ENCODE measurements at regions of chr14 and their contacts with region 1.

Region 1: GRCh38 chr14:63770187-63770807 is 42.4 kb upstream of the SGPP1 start:
- DNase-seq: peak; percentile 70
- H3K4me3 ChIP-seq: no peak overlapping the region
- H3K27ac ChIP-seq: no peak overlapping the region
- H3K4me1 ChIP-seq: no peaks in the 10 kb centered on the region
- H3K27me3 ChIP-seq: no peaks in the 10 kb centered on the region
- CTCF ChIP-seq: peak; percentile 78

Region 2: DNA sequence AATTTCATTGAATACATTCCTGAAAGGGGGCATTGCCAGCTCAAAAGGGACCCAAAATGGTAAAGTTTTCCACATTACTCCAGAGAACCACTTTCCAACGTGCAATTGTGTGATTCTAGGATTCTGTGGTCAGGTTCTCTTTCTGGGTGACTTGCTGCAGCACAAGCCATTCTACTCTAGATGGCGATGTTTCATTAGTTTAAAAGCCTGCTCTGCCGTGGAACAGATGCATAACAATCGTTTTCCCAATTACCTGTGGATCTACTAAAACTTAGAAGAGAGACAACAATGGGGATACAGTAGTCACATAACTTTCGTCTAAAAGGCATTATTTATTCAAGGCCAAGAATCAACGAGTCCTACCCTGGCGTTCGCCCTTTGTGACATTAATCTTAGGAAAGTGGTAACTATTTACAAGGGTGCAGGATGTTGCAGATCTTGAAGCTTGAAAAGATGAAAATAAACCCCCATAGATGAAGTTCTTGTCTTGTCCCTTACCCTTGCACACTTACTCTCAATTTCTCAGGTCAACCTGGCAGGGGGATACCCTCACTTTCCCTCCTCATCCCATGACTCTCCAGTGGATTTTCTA is 1607.2 kb before region 1 on chr14:
- CTCF ChIA-PET with region 1: no interaction called
- POLR2A ChIA-PET with region 1: no interaction called
- intact Hi-C with region 1: loop called (anchors 5 kb)
- DNase-seq: peak; percentile 74
- H3K4me3 ChIP-seq: no peak overlapping the region
- H3K27ac ChIP-seq: no peak overlapping the region
- H3K4me1 ChIP-seq: no peaks in the 10 kb centered on the region
- H3K27me3 ChIP-seq: no peaks in the 10 kb centered on the region
- CTCF ChIP-seq: peak; percentile 91

Region 3: DNA sequence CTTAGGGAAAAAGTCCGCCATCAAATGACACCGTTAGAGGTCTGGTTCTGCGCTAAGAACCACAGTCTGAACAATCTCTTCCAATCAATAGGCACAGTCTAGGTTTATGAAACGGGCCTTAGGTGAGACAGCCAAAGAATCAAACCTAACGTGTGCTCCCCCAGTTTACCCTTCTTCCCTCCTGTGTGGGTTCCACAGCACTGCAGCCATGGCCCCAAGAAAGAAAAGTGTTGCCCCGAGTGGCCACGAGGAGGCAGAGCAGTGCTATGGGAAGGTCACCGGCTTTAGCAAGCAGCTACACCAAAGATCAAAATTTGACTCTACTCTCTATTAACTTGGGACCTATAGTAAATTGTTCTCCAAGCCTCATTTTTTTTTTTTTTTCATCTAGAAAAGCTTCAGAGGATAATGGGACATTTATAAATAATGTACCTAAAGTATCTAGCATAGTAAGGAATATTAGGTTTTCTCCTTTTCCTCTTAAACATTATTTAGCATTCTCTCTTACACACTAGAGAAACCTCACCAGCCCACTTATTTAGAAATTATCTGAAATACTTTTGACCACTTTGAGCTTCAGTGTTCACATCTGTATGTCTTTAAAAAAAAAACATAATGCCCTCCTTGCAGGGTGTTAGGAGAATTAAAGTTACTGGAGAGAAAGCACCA is 381.4 kb before region 1 on chr14:
- CTCF ChIA-PET with region 1: interaction called, 16 read pairs
- POLR2A ChIA-PET with region 1: no interaction called
- intact Hi-C with region 1: loop called (anchors 10 kb)
- DNase-seq: peak; percentile 69
- H3K4me3 ChIP-seq: no peak overlapping the region
- H3K27ac ChIP-seq: no peak overlapping the region
- H3K4me1 ChIP-seq: no peaks in the 10 kb centered on the region
- H3K27me3 ChIP-seq: no peaks in the 10 kb centered on the region
- CTCF ChIP-seq: peak; percentile 86

Region 4: DNA sequence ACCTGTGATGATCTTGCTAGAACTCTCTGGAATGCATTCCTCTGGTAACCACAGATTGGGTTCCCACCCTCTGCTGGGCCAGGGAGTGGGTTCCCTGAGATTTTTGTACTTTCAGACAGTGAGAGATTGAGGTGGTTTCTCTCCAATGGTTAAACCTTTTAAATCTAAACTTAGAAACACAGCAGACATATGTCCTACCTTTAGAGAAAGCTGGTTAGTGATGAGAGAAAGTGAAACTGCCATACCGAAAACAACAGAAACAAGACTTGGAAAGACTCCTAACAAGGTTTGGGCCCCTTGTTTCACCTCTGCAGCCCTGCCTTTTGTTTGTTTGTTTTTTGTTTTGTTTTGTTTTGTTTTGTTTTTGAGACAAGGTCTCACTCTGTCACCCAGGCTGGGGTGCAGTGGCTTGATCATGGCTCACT is 32.7 kb before region 1 on chr14:
- CTCF ChIA-PET with region 1: no interaction called
- POLR2A ChIA-PET with region 1: interaction called, 15 read pairs
- intact Hi-C with region 1: no loop called
- DNase-seq: no peak
- H3K4me3 ChIP-seq: no peak overlapping the region
- H3K27ac ChIP-seq: no peak overlapping the region
- H3K4me1 ChIP-seq: no peaks in the 10 kb centered on the region
- H3K27me3 ChIP-seq: no peaks in the 10 kb centered on the region
- CTCF ChIP-seq: no peak